ENCODE measurements at regions of chr3 and their contacts with region 1.

Region 1: DNA sequence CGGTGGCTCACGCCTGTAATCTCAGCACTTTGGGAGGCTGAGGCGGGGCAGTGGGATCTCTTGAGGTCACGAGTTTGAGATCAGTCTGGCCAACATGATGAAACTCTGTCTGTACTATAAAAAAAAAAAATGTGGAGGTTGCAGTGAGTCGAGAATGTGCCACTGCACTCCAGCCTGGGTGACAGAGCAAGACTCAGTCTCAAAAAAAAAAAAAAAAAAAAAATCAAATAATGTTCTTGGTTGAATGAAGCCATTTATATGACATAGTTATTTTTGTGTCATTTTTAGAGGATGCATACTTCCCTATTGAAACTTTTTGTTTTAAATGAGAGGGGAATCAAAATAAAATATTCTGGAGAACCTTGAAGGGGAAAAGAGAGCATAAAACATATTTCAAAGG is 3.1 kb downstream of the HMCES start:
- DNase-seq: no peak

Region 2: DNA sequence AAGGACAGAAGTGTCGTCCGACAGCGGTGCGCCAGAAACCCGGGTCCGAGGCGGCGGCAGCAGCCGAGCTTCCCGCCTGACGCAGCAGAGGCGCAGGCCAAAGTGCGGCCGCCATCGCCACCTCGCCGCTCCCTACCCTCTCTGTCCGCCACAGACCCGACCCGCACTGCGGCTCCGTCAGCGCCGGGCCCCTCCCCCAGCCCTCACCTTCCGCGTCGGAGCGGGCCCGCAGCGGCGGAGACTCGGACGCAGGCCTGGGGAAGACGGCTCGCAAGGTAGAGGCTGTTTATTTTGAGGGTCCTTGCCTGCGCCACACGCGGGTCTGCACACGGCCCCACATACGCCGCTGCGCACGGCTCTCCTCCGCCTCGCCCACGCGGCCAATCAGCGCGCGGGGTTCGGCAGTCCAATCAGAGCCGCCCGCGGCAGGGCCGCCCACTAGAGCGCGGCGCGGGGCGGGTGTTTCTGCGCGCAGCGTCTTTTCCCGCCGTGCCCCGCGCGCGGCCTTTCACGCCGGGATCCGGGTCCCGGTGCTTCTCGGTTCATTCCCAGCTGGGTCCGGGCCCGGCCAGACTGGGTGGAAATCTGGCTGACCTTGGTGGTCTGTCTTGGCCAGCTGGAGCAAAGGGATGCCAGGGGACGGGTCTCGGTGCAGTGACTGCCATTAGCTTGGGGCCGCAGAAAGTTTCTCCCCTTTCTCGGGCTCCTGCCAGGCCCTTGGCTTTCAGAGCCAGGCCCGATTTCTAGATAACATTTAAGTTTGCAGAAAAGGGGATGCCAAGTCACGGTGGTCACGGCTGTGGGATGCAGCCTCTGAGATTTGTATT is 97.9 kb before region 1 on chr3 and contains the start of gene CNBP:
- intact Hi-C with region 1: no loop called
- DNase-seq: peak; percentile 84 to 99 (median 92)

Region 3: GRCh38 chr3:129314757-129315222 is 33.1 kb after region 1 on chr3:
- intact Hi-C with region 1: loop called (anchors 2 kb)
- DNase-seq: peak; percentile 73 to 98 (median 86)

Region 4: DNA sequence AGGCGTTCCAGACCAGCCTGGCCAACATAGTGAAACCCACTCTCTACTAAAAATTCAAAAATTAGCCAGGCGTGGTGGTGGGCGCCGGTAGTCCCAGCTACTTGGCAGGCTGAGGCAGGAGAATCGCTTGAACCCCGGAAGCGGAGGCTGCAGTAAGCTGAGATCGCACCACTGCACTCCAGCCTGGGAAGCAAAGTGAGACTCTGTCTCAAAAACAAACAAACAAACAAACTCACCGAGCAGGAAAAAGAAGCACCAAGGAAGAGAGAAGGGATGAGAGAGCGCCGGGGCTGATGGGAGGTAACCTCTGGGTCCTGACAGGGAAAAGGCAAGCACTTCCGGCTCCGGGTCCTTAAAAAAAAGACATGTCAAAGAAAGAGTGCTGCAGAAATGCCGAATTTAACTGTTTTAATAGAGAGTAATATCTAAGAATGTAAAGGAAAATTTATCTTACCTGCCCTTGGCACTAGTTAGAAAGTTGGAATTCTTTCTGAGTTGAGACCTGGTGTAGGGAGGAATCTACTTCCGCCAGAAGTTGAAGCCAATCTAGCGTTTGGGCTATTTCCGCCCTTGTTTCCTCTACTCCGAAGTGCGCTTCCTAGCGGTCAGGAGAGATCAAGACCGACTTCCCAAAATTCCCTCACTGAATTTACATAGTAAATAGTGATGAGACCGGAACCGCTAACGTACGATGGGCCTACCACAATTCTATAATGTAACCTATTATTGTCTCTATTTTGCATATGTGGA is 117.6 kb after region 1 on chr3:
- intact Hi-C with region 1: no loop called
- DNase-seq: peak in 9 of 10 donors; percentile 67 to 95 (median 75)